Psoas muscle (tissue), 8 donors: ENCODE measurements at regions of chrX and their contacts with region 1.

Region 1: GRCh38 chrX:66731398-66731797 is 92.5 kb upstream of the EDA2R start:
- DNase-seq: no peak
- ATAC-seq: no peak
- H3K4me3 ChIP-seq: no peak overlapping the region
- H3K27ac ChIP-seq: no peak overlapping the region
- H3K4me1 ChIP-seq: no peaks in the 10 kb centered on the region
- H3K27me3 ChIP-seq: no peaks in the 10 kb centered on the region
- CTCF ChIP-seq: no peak

Region 2: GRCh38 chrX:65581661-65582339 is 1149.6 kb before region 1 on chrX:
- intact Hi-C with region 1: loop called in 1 of 2 experiments (anchors 10 kb)
- DNase-seq: peak in 1 of 2 donors; percentile 37
- ATAC-seq: peak; percentile 55 to 85 (median 76)
- H3K4me3 ChIP-seq: no peak overlapping the region
- H3K27ac ChIP-seq: no peak overlapping the region
- H3K4me1 ChIP-seq: no peaks in the 10 kb centered on the region
- H3K27me3 ChIP-seq: peaks cover 0 to 22% (median 0%) of the 10 kb centered on the region in 3 donors
- CTCF ChIP-seq: peak; percentile 76

Region 3: DNA sequence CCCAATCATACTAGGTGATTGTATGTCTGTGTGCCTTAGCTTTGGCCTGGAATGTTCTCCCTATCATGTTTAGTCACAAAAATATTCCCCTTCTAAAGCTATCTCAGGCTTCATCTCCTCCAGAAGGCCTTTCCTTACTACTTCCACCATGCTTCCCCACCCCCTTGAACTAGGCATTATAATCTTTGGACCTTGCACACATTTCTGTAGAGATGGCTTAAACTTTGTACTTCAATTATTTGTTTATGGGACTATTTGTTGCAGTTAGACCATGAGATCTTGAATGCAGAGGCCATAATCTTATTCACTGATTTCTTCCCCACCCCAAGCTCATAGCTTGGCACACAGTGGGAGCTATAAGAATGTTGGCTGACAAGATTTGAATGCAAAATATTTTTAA is 169.5 kb after region 1 on chrX:
- intact Hi-C with region 1: no loop called
- DNase-seq: no peak
- ATAC-seq: no peak
- H3K4me3 ChIP-seq: no peak overlapping the region
- H3K27ac ChIP-seq: no peak overlapping the region
- H3K4me1 ChIP-seq: no peaks in the 10 kb centered on the region
- H3K27me3 ChIP-seq: peaks cover 0 to 9% (median 0%) of the 10 kb centered on the region in 3 donors
- CTCF ChIP-seq: no peak

Region 4: GRCh38 chrX:67317725-67318124 is 586.3 kb after region 1 on chrX:
- intact Hi-C with region 1: no loop called
- DNase-seq: no peak
- ATAC-seq: no peak
- H3K4me3 ChIP-seq: no peak overlapping the region
- H3K27ac ChIP-seq: no peak overlapping the region
- H3K4me1 ChIP-seq: no peaks in the 10 kb centered on the region
- H3K27me3 ChIP-seq: no peaks in the 10 kb centered on the region
- CTCF ChIP-seq: no peak